ENCODE measurements at regions of chr11 and their contacts with region 1.

Region 1: DNA sequence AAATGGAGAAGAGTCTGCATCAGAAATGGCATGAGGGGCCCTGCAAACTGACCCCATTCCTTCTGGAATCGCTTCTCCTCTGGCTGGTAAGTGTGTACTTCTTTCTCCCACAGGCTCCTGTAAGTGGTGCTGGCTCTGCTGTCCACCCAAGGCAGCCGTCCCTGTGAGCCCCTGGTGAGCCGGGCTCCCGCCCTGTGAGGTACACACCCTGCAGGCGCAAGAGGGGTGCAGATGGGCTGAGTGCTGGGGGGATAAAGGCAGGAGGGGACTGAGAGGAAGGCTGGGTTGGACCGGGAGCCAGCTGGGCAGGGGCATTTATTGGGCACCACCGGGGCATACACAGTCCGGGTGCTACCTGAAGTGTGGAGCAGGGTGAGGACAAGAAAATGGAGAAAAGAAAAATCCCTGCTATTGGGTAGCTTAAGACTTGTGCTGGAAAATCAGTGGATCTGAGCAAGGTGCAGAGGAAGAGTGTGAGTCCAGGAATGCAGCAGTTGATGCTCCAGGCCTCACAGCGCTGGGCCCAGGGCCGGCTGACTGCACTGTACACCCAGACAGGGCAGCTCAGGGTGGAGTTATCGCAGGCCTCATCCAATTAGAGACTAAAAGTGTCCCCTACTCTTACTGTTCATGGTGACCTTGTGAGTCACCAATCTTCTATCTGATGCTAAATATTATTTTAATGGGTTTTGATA is 455.1 kb upstream of the B3GAT1 start:
- DNase-seq: no peak
- CTCF ChIP-seq: no peak

Region 2: DNA sequence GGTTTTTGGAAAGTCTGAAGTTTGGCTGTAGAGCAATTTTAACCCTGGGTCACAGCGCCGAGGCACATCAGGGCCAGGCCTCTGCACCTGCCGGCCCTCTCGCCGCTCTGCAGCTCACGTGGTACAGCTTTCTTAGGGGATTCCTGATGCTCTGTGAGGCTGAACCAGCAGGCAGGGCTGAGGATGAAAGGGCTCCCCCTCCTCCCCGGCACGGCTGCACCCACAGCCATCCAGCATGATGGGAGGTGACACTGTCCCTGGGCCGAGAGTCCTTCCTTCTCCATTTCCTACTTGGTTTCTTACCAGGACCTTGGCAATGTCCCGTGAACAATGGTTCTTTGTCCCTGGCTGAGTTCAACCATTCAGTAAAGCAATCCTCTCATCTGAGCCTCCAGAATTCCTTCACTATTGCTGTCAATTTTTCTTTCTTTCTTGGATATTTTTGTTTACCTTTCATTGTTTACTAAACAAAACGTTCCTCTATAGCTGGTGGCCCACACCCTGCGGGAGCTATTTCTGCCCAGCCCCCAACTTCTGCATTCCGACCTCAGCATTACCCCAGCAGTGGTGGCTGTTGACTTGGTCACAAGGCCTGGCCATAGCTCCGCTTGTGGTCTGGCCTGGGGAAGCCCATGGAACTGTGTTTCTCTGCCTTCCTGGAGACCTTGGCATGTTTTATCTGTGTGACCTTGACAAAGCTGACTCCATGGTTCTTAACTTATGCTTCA is 282.3 kb before region 1 on chr11:
- CTCF ChIA-PET with region 1: no interaction called
- POLR2A ChIA-PET with region 1: no interaction called
- DNase-seq: no peak
- CTCF ChIP-seq: no peak

Region 3: GRCh38 chr11:134781380-134781866 is 85.7 kb before region 1 on chr11:
- CTCF ChIA-PET with region 1: no interaction called
- POLR2A ChIA-PET with region 1: no interaction called
- DNase-seq: no peak
- CTCF ChIP-seq: no peak

Region 4: GRCh38 chr11:134882141-134882540 is 15.0 kb after region 1 on chr11:
- CTCF ChIA-PET with region 1: interaction called, 15 read pairs
- POLR2A ChIA-PET with region 1: no interaction called
- DNase-seq: no peak
- CTCF ChIP-seq: no peak

Region 5: DNA sequence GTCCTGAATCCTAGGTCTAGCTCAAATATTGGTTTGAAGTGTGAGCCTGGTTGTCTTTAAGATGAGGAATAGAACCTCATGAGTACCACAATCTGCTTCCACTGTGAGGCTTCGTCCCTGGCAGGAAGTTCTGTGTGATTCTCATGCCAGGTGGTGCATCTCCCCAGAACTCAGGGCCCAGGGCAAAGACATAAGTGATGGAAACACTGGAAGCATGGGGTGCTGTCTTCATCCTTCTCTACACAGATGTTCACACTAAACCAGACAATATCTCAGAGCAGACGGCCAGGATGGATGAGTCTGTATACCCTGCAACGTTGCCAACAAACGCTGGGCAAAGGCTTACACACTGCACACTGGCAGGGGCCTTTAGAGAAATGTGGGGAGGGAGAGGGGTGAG is 20.8 kb after region 1 on chr11:
- CTCF ChIA-PET with region 1: interaction called, 15 read pairs
- POLR2A ChIA-PET with region 1: no interaction called
- DNase-seq: no peak
- CTCF ChIP-seq: no peak